ENCODE measurements at regions of chr17 and their contacts with region 1.

Region 1: GRCh38 chr17:81294856-81295680 is at the start of gene SLC38A10:
- DNase-seq: peak; percentile 97
- ATAC-seq: peak; percentile 91
- total RNA-seq, gene SLC38A10: 44.6 TPM

Region 2: DNA sequence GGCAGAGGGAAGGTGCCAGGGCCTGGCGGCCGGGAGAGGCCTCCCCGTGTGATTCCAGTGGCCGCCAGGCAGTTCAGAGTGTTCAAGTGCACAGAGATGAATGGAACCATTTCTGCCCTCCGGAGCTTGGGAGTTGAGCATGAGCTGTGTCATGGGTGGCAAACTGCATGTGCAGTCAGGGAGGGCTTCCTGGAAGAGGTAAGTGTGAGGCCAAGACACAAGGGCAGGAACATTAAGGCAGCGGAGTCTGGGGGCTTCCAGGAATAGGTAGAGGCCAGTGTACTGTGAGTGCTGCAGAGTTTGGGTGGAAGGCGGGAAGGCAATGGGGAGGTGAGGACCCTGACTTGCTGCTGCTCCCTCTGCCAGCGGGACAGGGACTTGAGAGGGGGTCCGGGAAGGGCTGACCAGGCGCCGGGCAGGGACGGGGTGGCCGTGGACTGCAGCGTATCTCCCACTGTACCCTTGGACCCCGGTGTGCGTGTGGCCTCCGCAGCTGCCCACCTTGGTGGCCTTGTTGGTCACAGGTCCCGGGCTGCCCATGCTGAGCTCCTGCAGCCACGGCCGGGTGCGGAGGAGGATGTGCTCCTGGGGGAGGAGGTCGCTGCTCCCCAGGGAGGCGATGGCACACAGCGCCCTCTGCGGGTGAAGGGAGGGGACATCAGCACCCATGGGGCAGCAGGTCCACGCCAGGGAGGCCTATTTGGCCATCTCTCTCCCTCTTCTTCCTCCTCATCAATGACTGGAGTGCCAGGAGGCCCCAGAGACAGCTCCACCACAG is 64.8 kb before region 1 on chr17:
- intact Hi-C with region 1: no loop called
- DNase-seq: no peak
- ATAC-seq: no peak

Region 3: GRCh38 chr17:81387100-81388090 is 92.3 kb after region 1 on chr17:
- intact Hi-C with region 1: loop called (anchors 2 kb)
- DNase-seq: peak; percentile 80
- ATAC-seq: peak; percentile 44

Region 4: DNA sequence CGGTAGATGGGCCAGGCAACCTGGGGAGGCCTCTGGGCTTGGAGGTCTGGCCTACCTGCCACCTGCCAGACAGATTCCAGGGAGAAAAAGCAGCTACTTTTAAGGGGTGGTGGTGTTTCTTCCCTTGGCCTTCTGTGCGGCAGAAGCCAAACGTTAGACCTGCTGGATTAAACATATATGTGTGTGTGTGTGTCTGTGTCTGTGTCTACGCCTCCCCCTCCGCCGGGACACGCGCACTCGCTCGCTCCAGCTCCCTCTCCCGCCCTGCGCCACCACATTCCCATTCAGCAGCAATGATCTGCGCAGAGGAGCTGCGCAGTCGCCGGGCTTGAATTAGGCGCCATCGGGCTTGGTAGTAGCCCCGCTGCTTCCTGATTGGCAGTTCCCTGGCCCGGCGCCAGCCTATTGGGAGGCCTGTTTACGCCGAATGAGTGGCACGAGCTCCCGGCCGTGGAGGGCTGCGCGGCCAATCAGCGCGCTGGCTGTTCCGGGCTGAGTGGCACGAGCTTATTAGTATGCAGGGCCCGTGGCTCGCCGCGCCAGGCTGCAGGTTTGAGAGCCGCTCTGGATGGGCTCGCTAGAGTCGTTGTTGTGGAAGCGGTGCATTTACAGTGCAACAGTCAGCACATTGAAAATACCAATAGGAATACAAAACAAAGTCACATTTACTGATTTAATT is 100.0 kb after region 1 on chr17 and contains the start of gene BAHCC1:
- intact Hi-C with region 1: loop called (anchors 2 kb)
- DNase-seq: peak; percentile 100
- ATAC-seq: peak; percentile 88
- total RNA-seq, gene BAHCC1: 9.9 TPM

Region 5: DNA sequence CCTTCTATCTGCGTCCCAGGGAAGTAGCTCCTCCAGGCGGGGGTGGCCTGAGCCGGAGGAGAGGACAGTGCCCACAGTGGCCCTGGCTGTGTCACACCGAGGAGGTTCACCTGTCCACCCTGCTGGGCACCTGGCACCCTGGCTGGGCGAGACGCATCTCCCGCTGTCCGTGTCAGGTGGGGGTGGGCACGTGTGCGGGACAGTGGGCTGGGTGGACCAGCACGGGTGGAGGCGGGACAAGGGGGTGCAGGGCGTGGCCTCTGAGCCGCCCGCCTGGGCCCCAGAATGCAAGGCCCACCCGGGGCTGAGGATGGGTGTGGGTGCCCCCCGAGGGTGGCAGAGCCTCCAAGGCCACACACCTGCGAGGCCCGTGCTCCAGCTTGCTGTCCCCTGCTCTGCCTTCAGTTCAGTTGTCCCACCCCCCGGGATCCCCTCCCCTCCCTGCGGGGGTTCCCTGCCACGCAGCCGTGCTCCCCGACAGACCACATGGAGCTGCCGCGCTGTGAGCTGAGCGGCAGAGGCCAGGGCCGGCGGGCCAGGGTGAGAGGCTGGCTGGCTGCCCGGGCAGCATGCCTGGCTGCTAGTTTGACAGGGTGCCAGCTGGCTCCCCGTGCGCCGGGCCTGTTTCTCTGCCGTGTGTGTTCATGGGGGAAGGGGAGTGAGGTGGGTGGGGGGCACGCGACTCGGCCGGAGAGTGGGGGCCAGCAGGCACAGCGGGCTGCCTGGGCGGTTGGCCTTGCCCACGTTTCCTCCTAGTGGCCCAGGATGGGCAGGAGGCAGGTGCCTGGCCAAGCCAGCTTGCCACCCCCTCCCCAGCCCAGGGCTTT is 134.1 kb after region 1 on chr17:
- intact Hi-C with region 1: no loop called
- DNase-seq: peak; percentile 87
- ATAC-seq: peak; percentile 72